ENCODE measurements at regions of chr3 and their contacts with region 1.

Region 1: GRCh38 chr3:141485641-141486495 is 959 bp upstream of the RASA2 start:
- H3K4me3 Mint-ChIP-seq: peak overlapping the region; percentile 71
- H3K27ac Mint-ChIP-seq: peak overlapping the region; percentile 90
- H3K4me1 Mint-ChIP-seq: peaks cover 62% of the 10 kb centered on the region
- H3K27me3 Mint-ChIP-seq: no peaks in the 10 kb centered on the region

Region 2: GRCh38 chr3:141498598-141499223 is 12.8 kb after region 1 on chr3:
- intact Hi-C with region 1: loop called (anchors 2 kb)
- H3K4me3 Mint-ChIP-seq: peak overlapping the region; percentile 30
- H3K27ac Mint-ChIP-seq: peak overlapping the region; percentile 81
- H3K4me1 Mint-ChIP-seq: peaks cover 34% of the 10 kb centered on the region
- H3K27me3 Mint-ChIP-seq: no peaks in the 10 kb centered on the region

Measured in dendritic cell treated with granulocyte-macrophage colony-stimulating factor and Interleukin-4, amounts not matched to agents 40 ng/mL and 50 ng/mL, for 4 days (primary cell).